Activated T-helper 1 cell treated with anti-CD3 and anti-CD28 coated beads, Interleukin-12 subunit alpha, Interleukin-12 subunit beta, Interleukin-2, Interleukin-4 antibody, amounts not matched to agents 30 ng/mL and 10 ng/mL and 1 ng/mL, durations not matched to agents 14 hours and 24 hours and 36 hours (primary cell): ENCODE measurements at regions of chr10 and their contacts with region 1.

Region 1: GRCh38 chr10:110210674-110211464 is 3.5 kb downstream of the MXI1 start:
- DNase-seq: peak; percentile 92
- H3K4me3 Mint-ChIP-seq: peak overlapping the region; percentile 96
- H3K27ac Mint-ChIP-seq: peak overlapping the region; percentile 95
- H3K4me1 Mint-ChIP-seq: peaks cover 70% of the 10 kb centered on the region
- H3K27me3 Mint-ChIP-seq: peaks cover 10% of the 10 kb centered on the region

Region 2: DNA sequence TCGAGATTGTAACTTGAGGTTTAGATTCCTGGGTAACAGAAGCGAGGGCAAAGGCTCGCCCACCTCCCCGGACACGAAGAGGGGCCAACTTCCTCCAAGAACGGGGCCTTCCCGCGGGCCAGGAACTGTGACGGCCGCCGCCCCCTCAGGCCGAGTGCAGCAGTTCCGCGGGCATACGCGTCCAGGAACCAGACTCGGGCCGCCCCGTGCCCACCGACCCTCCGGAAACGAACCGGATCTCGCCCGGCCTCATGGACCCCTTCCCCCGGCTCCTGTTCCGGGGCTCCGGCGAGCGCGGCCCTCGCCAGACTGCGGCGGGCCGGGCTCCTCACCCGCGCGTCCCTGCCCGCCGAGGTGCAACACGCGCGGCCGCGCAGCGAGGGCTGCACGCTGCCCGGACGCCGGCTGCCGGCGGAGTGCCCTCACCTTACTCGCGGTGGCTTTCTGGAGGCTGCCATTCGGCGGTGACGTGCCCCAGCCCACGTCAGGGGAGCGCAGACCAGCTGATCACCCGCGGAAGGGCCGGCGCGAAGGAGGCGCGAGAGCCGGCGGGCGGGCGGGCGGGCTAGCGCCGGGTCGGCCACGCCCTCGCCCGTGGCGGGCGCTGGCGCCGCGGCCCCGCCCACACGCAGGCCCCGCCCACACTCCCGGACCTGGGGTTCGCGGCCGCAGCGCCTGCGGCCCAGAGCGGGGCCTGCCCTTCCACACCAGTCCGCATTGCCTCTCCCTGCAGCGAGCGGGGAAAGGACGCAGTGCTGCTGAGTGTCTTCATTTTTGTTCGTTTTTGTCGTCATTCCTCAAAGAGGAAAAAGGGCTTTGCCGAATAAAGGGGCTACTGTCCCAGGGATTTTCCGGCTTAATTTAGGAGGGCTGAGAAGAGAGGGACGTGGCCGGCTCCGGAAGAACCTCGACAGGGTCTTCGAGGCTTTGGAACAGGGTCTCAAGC is 287.6 kb before region 1 on chr10 and contains the start of gene XPNPEP1:
- intact Hi-C with region 1: loop called (anchors 5 kb)
- DNase-seq: peak; percentile 81
- H3K4me3 Mint-ChIP-seq: peak within 1 kb of the TSS; percentile 94
- H3K27ac Mint-ChIP-seq: peak within 1 kb of the TSS; percentile 92
- H3K4me1 Mint-ChIP-seq: peaks cover 58% of the 10 kb centered on the region
- H3K27me3 Mint-ChIP-seq: peaks cover 5% of the 10 kb centered on the region
- total RNA-seq, gene XPNPEP1: 85.1 and 93.2 TPM in 2 replicates

Region 3: GRCh38 chr10:110036640-110037039 is 174.2 kb before region 1 on chr10:
- intact Hi-C with region 1: no loop called
- DNase-seq: no peak
- H3K4me3 Mint-ChIP-seq: no peak overlapping the region
- H3K27ac Mint-ChIP-seq: no peak overlapping the region
- H3K4me1 Mint-ChIP-seq: peaks cover 63% of the 10 kb centered on the region
- H3K27me3 Mint-ChIP-seq: no peaks in the 10 kb centered on the region

Region 4: DNA sequence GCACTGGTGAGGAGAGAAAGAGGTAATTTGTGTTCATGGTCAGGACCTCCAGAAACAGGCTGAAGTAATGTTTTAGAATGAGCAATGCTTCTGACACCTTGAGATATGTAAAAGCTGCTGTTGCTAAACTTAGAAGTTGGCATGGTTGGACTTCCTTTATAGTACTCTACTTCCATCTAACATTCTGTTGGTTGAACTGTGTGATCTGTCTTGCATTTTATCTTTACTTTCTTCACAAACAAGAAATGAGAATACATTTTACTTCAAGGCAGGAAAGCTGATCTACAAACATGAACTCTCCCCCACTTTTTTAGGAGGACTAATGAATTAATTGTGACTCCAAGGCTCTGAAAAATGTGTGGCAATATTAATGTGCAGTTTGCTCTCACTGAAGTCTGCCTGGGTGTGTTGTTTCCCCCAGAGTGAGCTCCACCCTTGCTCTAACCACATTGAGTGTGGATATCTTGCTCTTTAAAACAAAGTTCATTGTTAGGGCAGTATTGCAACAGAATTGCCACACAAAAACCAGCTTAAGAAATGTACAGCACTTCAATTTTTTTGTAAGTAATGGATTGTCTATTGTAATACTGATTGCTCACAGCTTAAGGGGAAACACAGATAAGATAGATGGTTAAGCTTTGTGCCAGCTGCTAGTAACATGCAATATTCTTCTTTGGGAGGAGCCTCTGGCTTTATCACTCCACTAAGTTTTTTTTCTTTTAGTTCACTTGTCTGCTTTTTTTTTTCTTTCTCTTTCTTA is 134.1 kb before region 1 on chr10:
- intact Hi-C with region 1: loop called (anchors 2 kb)
- DNase-seq: no peak
- H3K4me3 Mint-ChIP-seq: peak overlapping the region; percentile 82
- H3K27ac Mint-ChIP-seq: peak overlapping the region; percentile 93
- H3K4me1 Mint-ChIP-seq: peaks cover 89% of the 10 kb centered on the region
- H3K27me3 Mint-ChIP-seq: no peaks in the 10 kb centered on the region

Region 5: GRCh38 chr10:110225756-110226542 is 15.1 kb after region 1 on chr10:
- intact Hi-C with region 1: loop called (anchors 1 kb)
- DNase-seq: peak; percentile 84
- H3K4me3 Mint-ChIP-seq: peak overlapping the region; percentile 92
- H3K27ac Mint-ChIP-seq: peak overlapping the region; percentile 97
- H3K4me1 Mint-ChIP-seq: peaks cover 47% of the 10 kb centered on the region
- H3K27me3 Mint-ChIP-seq: peaks cover 4% of the 10 kb centered on the region

Region 6: GRCh38 chr10:110304780-110305421 is 94.0 kb after region 1 on chr10 and contains the start of gene SMNDC1:
- intact Hi-C with region 1: loop called (anchors 1 kb)
- DNase-seq: peak; percentile 96
- H3K4me3 Mint-ChIP-seq: peak within 1 kb of the TSS; percentile 97
- H3K27ac Mint-ChIP-seq: peak within 1 kb of the TSS; percentile 96
- H3K4me1 Mint-ChIP-seq: peaks cover 48% of the 10 kb centered on the region
- H3K27me3 Mint-ChIP-seq: no peaks in the 10 kb centered on the region
- total RNA-seq, gene SMNDC1: 47.8 and 48.0 TPM in 2 replicates

Region 7: DNA sequence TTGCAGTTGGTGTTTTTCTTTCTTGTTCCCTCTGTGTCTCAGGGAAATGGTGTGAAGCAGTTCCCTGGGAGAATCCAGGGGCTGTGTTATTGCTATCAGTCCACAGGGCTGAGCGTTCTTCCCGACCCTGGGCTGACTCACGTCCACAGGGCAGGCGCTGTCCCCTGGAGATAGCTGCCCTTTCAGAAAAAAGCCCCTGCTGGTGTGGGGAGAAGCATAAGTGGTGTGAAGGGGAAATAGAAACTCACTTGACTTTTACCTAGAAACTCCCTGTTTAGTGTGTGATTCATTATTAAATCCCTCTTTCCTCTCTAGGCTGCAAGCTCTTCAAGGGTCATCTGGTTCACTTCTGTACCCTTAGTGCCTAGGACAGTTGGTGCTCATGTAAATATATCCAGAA is 157.1 kb after region 1 on chr10:
- intact Hi-C with region 1: no loop called
- DNase-seq: no peak
- H3K4me3 Mint-ChIP-seq: peak overlapping the region; percentile 21
- H3K27ac Mint-ChIP-seq: peak overlapping the region; percentile 61
- H3K4me1 Mint-ChIP-seq: peaks cover 81% of the 10 kb centered on the region
- H3K27me3 Mint-ChIP-seq: no peaks in the 10 kb centered on the region

Region 8: DNA sequence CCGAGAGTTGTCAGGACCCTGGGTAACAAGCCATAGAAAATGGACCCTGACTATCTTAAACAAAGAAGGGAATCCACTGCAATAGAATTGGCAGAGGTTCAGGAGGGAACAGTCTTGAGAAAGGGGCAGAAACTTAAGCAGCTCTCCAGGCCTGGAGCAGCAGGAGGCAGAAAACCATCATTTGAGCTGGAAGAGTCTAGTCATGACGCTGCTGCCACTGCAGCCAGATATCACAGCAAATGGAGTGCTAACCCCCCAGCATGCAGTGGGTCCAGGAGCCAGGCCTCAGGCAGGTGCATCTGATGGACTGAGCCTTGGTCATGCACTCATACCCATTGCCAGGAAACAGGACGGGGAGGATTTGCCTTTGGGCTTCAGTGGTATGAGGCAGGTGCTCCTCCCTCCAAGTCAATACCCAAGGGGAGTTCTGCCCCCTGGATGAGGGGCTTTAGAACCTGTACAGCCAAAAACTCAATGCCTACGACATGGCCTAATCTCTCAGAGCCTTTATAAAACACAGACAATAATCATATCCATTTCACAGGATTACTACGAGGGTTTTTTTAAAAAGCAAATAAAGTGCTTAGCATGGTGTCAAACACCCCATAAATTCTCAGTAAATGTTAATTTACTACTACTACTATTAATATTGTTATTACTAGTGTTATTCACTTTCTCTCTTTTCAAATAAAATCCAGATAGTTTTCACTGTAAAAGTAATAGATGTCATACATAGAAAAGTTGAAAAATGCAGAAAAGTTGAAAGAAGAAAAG is 317.5 kb after region 1 on chr10:
- intact Hi-C with region 1: loop called (anchors 5 kb)
- DNase-seq: no peak
- H3K4me3 Mint-ChIP-seq: peak overlapping the region; percentile 64
- H3K27ac Mint-ChIP-seq: peak overlapping the region; percentile 94
- H3K4me1 Mint-ChIP-seq: peaks cover 83% of the 10 kb centered on the region
- H3K27me3 Mint-ChIP-seq: no peaks in the 10 kb centered on the region